Calu3 (cell line): ENCODE measurements at regions of chr15 and their contacts with region 1.

Region 1: DNA sequence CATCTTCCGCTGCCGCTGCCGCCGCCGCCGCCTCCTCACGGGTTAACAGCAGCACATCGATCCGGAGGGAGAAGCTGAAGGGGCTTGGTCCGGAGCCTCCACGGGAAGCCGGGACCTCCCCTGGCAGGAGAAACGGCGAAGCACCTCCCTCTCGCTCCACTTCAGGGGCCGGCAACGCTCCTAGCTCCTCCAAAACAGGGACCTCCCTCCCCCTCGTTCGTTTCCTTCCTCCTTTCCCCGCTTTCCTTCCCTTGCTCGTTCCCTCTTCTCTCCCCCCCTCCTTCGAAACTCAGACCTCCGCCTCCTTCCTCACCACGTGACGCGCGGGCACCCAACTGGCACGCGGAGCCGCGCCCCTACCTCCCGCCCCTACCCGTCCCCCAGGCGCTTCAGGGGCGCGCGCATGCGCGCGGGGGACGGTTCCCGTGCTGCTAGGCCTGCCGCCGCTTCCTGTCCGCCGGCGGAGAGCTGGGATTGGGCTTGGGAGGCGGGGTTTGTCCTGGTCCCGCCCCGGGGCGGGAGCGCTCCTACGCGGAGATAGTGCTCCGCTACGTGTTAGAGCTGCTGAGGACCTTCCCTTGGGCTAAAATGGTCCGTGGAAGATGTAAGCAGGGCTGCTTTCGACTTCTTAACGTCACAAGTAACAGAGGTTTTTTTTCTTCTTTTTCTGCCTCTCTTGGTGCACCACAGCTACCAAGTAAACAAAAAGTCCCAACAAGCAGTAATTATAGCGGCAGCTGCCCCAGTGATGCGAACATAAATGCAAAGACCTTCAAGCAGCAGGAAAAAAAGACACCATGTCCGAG is at the start of gene ADAM10:
- DNase-seq: peak; percentile 99
- H3K4me3 Mint-ChIP-seq: peak within 1 kb of the TSS; percentile 88
- H3K27ac Mint-ChIP-seq: peak within 1 kb of the TSS; percentile 87
- H3K4me1 Mint-ChIP-seq: peaks cover 5% of the 10 kb centered on the region
- H3K27me3 Mint-ChIP-seq: no peaks in the 10 kb centered on the region
- CTCF ChIP-seq: no peak
- total RNA-seq, gene ADAM10: 407 and 474 TPM in 2 replicates

Region 2: GRCh38 chr15:58269455-58270414 is 480.0 kb before region 1 on chr15:
- CTCF ChIA-PET with region 1: interaction called, 4 read pairs
- intact Hi-C with region 1: loop called (anchors 5 kb)
- DNase-seq: peak; percentile 76
- H3K4me3 Mint-ChIP-seq: no peak overlapping the region
- H3K27ac Mint-ChIP-seq: peak overlapping the region; percentile 42
- H3K4me1 Mint-ChIP-seq: peaks cover 18% of the 10 kb centered on the region
- H3K27me3 Mint-ChIP-seq: no peaks in the 10 kb centered on the region
- CTCF ChIP-seq: peak; percentile 74

Region 3: DNA sequence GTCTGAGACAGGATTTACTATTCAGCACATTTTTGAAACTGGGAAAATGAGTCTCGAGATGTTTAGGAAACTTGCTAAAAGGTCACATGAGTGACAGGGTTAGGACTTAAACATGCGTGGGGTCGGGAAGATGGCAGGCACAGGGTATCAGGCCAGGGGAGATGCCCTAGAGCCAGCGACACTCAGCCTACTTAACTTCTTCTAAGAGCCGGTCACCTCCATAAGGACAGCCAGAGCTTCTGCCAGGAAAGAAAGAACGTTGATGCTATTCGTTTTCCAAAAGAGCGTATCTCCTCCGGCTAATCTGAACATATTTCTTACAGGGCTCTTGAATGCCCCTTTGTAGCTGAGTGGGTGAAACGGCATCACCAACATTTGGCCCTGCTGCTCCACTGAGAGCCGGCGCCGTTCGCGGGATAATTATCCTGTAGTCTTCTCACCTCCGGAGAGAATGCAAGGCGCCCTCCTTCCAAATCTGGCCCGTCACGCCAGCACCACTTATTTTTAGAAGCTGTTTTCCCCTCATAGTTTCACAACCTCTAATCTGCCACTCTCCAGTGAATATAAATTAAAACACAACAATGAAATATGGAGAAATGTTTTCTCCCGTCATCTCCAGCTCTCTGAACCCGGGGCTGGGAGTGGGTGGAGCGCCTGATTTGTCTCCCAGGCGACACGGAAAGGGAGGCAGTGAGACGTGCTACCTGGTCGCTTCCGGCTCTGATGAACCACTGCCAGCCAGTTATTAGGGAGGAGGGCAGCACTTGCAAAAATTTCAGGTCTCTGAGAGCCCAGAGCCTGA is 259.4 kb before region 1 on chr15:
- CTCF ChIA-PET with region 1: no interaction called
- intact Hi-C with region 1: no loop called
- DNase-seq: no peak
- H3K4me3 Mint-ChIP-seq: no peak overlapping the region
- H3K27ac Mint-ChIP-seq: no peak overlapping the region
- H3K4me1 Mint-ChIP-seq: peaks cover 8% of the 10 kb centered on the region
- H3K27me3 Mint-ChIP-seq: no peaks in the 10 kb centered on the region
- CTCF ChIP-seq: no peak

Region 4: DNA sequence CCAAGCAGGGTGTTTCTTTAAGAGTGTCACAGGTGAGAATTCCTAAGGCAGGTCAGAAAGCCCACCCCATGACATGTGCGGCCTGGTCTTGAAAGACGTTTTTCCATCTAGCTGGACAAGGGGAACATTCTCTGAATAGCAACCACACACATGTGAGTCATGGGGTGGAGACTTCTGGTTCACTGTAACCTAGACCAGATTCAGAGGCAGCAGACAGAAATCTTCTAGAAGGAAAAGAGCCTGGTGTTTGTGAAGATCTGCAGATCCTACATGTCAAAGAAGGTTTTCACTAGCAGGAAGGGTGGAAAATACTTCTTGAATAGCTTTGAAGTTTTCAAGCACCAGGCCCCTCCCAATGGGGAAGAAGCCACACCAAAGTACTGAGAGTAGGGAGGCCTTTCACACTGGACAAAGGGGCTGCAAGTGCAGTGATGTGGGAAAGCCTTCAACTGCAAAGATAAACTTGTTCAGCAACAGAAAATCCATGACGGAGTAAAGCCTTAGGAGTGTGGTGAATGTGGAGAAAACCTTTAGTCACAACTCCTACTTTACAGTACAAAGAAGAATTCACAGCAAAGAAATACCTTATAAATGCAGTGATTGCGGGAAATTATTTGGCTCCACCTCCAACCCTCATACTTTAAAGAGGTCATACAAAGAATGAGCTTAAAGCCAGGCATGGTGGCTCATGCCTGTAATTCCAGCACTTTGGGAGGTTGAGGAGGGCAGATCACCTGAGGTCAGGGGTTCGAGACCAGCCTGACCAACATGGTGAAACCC is 17.8 kb before region 1 on chr15:
- CTCF ChIA-PET with region 1: interaction called, 10 read pairs
- intact Hi-C with region 1: no loop called
- DNase-seq: peak; percentile 69
- H3K4me3 Mint-ChIP-seq: peak overlapping the region; percentile 26
- H3K27ac Mint-ChIP-seq: peak overlapping the region; percentile 94
- H3K4me1 Mint-ChIP-seq: peaks cover 60% of the 10 kb centered on the region
- H3K27me3 Mint-ChIP-seq: no peaks in the 10 kb centered on the region
- CTCF ChIP-seq: no peak